WTC11 (cell line): ENCODE measurements at regions of chr17 and their contacts with region 1.

Region 1: GRCh38 chr17:79991140-79991923 is 44.3 kb downstream of the TBC1D16 start:
- DNase-seq: peak; percentile 87
- ATAC-seq: peak; percentile 82
- H3K4me3 Mint-ChIP-seq: peak overlapping the region; percentile 29; the same call in 1 of the 2 replicates
- H3K27ac Mint-ChIP-seq: peak overlapping the region; percentile 79; the same call in 1 of the 2 replicates
- H3K4me1 Mint-ChIP-seq: peaks cover 58% of the 10 kb centered on the region
- H3K27me3 Mint-ChIP-seq: no peaks in the 10 kb centered on the region
- CTCF ChIP-seq: peak; percentile 15; the same call in 1 of the 2 replicates

Region 2: DNA sequence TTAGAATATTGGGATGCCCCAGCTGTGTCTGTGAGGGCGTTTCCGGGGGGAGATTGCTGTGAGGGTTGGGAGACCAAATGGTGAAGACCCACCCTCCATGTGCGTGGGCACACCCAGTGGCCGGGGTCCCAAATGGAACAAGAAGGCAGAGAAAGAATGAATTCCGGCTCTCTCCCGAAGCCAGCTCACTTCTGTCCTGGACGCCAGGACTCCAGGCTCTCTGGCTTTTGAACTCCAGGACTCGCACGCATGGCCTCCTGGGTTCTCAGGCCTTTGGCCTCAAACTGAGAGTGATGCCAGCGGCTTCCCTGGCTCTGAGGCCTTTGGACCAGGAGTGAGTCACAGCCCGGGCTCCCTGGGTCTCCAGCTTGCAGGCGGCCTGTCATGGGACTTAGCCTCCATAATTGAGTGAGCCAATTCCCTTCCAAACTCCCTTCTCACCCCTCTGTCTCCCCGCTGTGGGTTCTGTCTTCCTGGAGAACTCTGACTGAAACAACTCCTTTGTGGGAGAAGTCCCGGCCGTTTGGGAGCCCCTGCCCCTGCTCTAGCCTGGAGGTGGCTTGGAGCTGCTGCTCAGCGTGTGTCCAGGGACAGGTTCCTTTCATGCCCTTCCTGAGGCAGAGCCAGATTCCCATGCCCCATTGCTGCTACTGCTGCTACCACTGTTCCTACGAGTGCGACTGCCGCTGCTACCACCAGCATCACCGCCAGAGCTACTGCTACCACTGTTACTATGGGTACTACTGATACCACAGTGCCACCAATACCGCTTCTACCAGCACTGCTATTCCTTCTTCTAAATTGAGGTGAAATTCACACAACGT is 102.3 kb before region 1 on chr17:
- CTCF ChIA-PET with region 1: no interaction called
- POLR2A ChIA-PET with region 1: interaction called, 10 read pairs
- DNase-seq: no peak
- ATAC-seq: no peak
- H3K4me3 Mint-ChIP-seq: no peak overlapping the region
- H3K27ac Mint-ChIP-seq: no peak overlapping the region; the same call in 1 of the 2 replicates
- H3K4me1 Mint-ChIP-seq: no peaks in the 10 kb centered on the region
- H3K27me3 Mint-ChIP-seq: peaks cover 11% of the 10 kb centered on the region
- CTCF ChIP-seq: no peak

Region 3: GRCh38 chr17:79925242-79925957 is 65.9 kb before region 1 on chr17:
- CTCF ChIA-PET with region 1: no interaction called
- POLR2A ChIA-PET with region 1: no interaction called
- DNase-seq: no peak
- ATAC-seq: no peak
- H3K4me3 Mint-ChIP-seq: no peak overlapping the region
- H3K27ac Mint-ChIP-seq: no peak overlapping the region
- H3K4me1 Mint-ChIP-seq: peaks cover 13% of the 10 kb centered on the region
- H3K27me3 Mint-ChIP-seq: peaks cover 8% of the 10 kb centered on the region
- CTCF ChIP-seq: no peak

Region 4: DNA sequence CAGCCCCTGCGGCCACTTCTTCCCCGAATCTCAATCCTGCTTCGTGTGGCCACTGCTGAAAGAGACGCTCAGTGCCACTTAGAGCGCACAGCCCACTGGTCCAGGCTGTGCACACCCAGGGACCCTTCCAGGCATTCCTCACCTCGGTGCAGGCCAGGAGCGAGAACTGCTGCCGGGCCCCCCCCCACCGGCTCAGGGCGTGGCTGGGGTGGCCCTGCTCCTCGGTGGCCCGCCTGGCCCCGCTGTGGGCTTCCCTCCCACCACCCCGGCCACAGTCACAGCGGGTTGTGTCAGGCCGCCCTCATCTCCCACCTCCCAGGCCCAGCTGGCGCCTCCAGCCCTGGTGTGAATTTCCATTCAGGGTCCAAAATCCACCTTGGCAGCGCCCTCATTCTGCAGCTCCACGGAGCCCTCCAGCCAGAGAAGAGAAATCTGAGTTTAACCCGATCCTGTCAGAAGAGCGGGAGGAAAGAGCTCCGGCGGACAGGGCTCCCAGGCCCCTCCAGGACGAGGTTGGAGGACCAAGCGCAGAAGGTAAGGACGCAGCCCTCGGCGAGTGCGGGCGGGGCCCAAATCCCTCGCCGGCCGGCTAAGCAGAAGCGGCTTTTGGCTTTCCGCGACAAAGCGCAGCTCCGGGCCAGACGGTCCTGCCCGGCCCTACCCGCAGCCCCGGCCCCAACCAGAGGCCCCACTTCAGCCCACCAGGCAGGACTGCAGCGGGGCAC is 32.3 kb after region 1 on chr17:
- CTCF ChIA-PET with region 1: no interaction called
- POLR2A ChIA-PET with region 1: no interaction called
- DNase-seq: no peak
- ATAC-seq: peak; percentile 49
- H3K4me3 Mint-ChIP-seq: no peak overlapping the region
- H3K27ac Mint-ChIP-seq: 0 out of 2 replicates have a peak overlapping the region, but pooled peaks have one; percentile 32
- H3K4me1 Mint-ChIP-seq: peaks cover 24% of the 10 kb centered on the region
- H3K27me3 Mint-ChIP-seq: no peaks in the 10 kb centered on the region
- CTCF ChIP-seq: no peak